ENCODE measurements at regions of chr10 and their contacts with region 1.

Region 1: GRCh38 chr10:31133628-31134302 is 102.1 kb upstream of the ZNF438 start:
- DNase-seq: peak; percentile 52
- H3K4me3 Mint-ChIP-seq: peak overlapping the region; percentile 60
- H3K27ac Mint-ChIP-seq: peak overlapping the region; percentile 84
- H3K4me1 Mint-ChIP-seq: peaks cover 45% of the 10 kb centered on the region
- H3K27me3 Mint-ChIP-seq: no peaks in the 10 kb centered on the region

Region 2: GRCh38 chr10:30980951-30981616 is 152.7 kb before region 1 on chr10:
- intact Hi-C with region 1: loop called (anchors 10 kb)
- DNase-seq: no peak
- H3K4me3 Mint-ChIP-seq: no peak overlapping the region
- H3K27ac Mint-ChIP-seq: no peak overlapping the region
- H3K4me1 Mint-ChIP-seq: peaks cover 15% of the 10 kb centered on the region
- H3K27me3 Mint-ChIP-seq: no peaks in the 10 kb centered on the region

Region 3: DNA sequence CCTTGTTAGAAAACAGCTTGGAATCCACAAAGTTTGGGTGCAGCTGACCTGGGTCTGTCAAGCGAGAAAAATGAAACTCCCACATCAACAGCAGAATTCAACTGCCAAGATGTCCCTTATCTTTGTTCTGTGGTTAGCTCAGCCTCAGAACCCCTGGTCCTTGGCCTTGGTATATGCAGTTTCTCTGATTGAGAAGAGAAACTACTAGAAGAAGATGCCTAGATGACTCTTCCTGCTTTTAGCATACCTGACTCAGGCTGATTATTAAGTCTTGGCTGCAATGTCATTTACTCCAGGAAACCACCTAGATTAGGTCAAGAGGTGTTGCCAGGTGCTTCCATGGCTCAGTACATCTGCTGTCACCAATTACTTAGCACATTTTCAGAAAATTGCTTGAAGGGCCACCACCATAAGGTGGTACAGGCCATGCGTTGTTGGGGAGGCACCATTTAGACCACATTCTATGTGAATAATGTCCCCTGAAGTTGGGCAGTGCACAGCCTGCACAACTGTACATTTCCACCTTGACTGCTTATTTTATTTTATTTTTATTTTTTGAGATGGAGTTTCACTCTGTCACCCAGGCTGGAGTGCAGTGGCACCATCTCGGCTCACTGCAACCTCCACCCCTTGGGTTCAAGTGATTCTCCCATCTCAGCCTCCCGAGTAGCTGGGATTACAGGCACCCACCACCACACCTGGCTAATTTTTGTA is 42.7 kb before region 1 on chr10:
- intact Hi-C with region 1: loop called (anchors 2 kb)
- DNase-seq: peak; percentile 46
- H3K4me3 Mint-ChIP-seq: no peak overlapping the region
- H3K27ac Mint-ChIP-seq: peak overlapping the region; percentile 82
- H3K4me1 Mint-ChIP-seq: peaks cover 31% of the 10 kb centered on the region
- H3K27me3 Mint-ChIP-seq: no peaks in the 10 kb centered on the region

Region 4: DNA sequence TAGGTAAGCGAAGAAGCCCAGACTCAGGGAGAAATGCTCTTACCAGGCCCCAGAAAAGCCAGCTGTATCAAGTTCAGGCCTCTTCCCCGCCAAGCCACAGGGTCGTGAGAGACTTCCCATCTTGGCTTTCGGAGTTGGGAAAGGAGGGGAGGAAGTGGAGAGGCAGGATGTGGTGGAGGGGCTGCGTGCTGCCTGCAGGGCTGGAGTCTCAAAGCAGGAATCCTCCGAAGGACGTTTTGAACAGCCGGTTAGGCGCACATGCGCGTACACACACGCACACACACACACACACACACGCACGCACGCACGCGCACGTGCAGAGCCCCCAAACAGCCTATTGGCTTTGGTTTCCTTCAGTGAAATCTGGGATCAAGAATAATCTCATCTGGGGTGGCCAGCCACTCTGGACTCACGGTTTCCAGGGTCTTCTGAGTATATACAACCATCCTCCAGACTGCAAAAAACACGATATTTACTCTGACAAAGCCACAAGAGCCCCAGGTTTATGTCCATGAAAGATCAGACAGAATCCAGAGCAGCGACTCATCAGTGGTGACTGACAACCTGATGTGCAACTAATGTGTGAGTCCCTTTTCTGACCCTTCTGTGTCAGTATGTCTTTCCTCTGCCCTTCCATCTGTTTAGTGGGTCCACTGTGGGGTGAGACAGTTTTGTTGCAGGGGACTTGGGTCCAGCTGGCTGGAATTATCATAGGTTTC is 12.9 kb after region 1 on chr10:
- intact Hi-C with region 1: loop called (anchors 1 kb)
- DNase-seq: no peak
- H3K4me3 Mint-ChIP-seq: peak overlapping the region; percentile 66
- H3K27ac Mint-ChIP-seq: peak overlapping the region; percentile 81
- H3K4me1 Mint-ChIP-seq: peaks cover 48% of the 10 kb centered on the region
- H3K27me3 Mint-ChIP-seq: no peaks in the 10 kb centered on the region

Measured in activated T-helper 2 cell treated with anti-CD3 and anti-CD28 coated beads, Interferon-gamma antibody, Interleukin-2, Interleukin-4, amounts not matched to agents 10 μg/mL and 5 μg/mL and 100 μg/mL, durations not matched to agents 14 hours and 24 hours and 36 hours (primary cell).